ENCODE measurements at regions of chr20 and their contacts with region 1.

Region 1: DNA sequence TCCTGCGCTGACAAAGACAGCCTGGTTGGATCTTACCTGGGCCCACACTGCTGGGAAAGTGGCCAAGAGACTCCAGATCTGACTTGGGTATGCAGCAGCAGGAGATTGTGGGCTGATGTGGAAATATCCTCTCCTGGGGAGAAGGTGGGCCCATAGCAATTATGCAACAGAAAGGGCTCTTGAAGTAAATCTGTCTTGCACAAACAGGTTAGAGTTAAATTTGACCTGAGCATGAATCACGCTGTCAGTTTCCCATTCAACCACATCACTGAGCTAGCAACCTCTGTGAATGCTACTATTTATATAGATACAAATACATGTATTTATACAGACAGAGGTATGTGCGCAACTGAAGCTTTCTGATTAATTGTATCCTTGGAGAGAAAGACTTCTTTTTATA is 28.3 kb upstream of the PDYN start:
- DNase-seq: no peak
- ATAC-seq: no peak

Region 2: DNA sequence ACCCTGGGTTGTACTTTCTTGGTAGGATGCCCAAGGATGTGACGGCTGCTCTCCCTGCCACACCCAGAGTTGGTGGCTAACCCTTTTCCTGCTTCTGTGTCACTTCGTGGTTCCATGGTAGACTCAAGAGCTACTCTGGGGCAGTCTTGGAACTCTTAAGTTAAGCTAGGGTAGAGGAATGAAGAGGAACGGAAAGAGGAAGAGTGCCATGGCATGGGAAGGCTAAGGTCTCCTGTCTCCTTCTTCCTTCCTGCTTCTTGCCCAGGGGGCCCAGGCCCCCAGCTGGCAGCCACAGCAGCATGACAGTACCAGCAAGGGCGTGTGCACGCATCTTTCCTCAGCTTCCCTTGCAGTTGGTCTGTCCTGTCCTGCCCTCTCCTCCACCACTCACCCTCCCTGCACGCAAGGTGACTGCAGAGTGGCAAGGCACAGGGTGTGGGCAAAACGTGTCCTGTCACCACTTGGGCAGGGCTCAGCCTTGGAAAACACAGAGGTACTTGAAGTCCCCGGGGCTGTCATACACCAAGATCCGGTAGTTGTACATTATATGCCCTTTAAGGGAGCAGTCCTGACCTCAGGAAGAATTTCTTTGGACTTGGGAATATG is 233.9 kb after region 1 on chr20:
- intact Hi-C with region 1: loop called in 1 of 2 experiments (anchors 5 kb)
- DNase-seq: no peak
- ATAC-seq: no peak